MCF 10A (cell line): ENCODE measurements at regions of chr9 and their contacts with region 1.

Region 1: DNA sequence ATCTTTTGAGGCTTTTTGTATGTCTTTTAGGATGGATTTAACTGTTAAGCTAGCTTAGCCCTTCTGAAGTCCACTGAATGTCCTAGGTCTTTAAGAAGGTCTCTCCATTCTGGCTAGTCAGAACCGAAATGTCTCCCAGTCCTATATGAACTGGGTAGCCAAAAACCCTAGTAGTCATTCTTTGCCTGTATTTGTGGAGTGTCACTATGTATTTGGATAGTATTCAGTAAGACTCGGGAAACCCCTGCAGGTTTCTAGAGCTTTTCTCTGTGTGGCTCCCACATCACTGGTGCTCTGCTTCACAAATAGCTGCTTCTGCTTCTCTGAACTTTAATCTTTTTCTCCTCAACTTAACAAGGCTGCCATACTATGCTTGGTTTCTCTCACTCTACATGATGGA is 68.0 kb downstream of the RIC1 start:
- DNase-seq: no peak
- H3K4me3 Mint-ChIP-seq: no peak overlapping the region
- H3K27ac Mint-ChIP-seq: no peak overlapping the region
- H3K4me1 Mint-ChIP-seq: peaks cover 16% of the 10 kb centered on the region
- H3K27me3 Mint-ChIP-seq: no peaks in the 10 kb centered on the region
- CTCF ChIP-seq: no peak

Region 2: DNA sequence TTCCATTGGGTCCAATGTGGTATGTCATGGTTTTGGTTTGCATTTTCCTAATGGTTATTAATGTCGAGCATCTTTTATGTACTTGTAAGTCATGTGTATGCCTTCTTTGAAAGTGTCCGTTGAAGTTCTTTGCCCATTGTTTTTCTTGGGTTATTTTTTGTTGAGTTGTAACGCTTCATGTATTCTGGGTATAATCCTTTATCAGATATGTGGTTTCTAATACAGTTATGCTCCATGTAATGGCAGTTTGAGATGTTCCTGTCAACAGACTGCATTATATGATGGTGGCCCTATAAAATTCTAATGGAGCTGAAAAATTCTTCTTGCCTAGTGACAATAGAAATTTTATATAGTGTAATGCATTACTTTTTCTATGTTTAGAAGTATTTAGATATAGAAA is 50.8 kb before region 1 on chr9:
- CTCF ChIA-PET with region 1: no interaction called
- POLR2A ChIA-PET with region 1: no interaction called
- intact Hi-C with region 1: loop called (anchors 5 kb)
- DNase-seq: no peak
- H3K4me3 Mint-ChIP-seq: no peak overlapping the region
- H3K27ac Mint-ChIP-seq: no peak overlapping the region
- H3K4me1 Mint-ChIP-seq: peaks cover 22% of the 10 kb centered on the region
- H3K27me3 Mint-ChIP-seq: no peaks in the 10 kb centered on the region
- CTCF ChIP-seq: no peak